WTC11 (cell line): ENCODE measurements at regions of chr1 and their contacts with region 1.

Region 1: DNA sequence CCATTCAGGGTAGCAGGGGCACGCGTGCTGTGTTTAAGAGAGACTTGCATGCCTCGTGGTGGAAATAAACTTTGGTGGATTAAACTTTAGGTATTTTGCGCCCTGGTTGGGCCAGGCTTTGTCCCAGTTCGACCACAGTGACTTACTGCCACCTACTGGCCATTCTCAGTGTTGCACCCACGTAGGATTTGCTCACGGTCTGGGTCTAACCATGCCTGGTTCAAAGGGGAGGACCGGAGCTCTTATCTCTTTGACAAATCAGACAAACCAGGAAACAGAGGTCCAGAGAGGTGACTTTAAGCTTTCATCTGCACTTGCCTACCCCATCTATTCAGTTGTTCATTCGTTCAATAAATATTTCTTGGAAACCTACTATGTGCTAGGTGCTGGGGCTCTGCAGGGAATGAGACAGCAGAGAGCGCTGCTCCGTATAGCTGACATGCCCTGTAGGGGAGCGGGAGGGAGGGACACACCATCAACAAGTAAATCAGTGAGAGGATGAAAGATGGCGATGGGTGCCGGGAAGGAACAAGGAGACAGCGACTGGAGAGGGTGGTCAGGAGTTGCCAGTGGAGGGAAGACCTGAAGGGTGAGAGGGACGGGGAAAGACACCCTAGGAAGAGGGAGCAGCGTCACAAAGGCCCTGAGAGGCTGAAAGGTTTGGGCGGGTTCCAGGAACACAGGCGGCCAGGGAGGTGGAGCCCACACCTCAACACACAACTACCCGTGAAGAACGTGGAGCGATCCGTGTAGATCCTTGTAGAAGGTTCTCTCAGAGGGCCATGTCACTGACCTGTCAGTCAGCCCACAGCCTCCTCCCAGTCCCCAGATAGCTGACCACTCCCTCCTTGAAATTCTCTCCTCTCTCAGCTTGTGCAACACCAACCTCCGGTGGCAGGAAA is 27.2 kb upstream of the TINAGL1 start:
- DNase-seq: peak; percentile 93
- ATAC-seq: peak; percentile 89
- H3K4me3 Mint-ChIP-seq: peak overlapping the region; percentile 81
- H3K27ac Mint-ChIP-seq: no peak overlapping the region
- H3K4me1 Mint-ChIP-seq: peaks cover 14% of the 10 kb centered on the region; the same call in 1 of the 2 replicates
- H3K27me3 Mint-ChIP-seq: no peaks in the 10 kb centered on the region
- CTCF ChIP-seq: peak; percentile 91

Region 2: GRCh38 chr1:31318146-31318545 is 231.0 kb before region 1 on chr1:
- CTCF ChIA-PET with region 1: no interaction called
- POLR2A ChIA-PET with region 1: no interaction called
- DNase-seq: no peak
- ATAC-seq: no peak
- H3K4me3 Mint-ChIP-seq: no peak overlapping the region
- H3K27ac Mint-ChIP-seq: no peak overlapping the region
- H3K4me1 Mint-ChIP-seq: no peaks in the 10 kb centered on the region
- H3K27me3 Mint-ChIP-seq: no peaks in the 10 kb centered on the region
- CTCF ChIP-seq: no peak

Region 3: DNA sequence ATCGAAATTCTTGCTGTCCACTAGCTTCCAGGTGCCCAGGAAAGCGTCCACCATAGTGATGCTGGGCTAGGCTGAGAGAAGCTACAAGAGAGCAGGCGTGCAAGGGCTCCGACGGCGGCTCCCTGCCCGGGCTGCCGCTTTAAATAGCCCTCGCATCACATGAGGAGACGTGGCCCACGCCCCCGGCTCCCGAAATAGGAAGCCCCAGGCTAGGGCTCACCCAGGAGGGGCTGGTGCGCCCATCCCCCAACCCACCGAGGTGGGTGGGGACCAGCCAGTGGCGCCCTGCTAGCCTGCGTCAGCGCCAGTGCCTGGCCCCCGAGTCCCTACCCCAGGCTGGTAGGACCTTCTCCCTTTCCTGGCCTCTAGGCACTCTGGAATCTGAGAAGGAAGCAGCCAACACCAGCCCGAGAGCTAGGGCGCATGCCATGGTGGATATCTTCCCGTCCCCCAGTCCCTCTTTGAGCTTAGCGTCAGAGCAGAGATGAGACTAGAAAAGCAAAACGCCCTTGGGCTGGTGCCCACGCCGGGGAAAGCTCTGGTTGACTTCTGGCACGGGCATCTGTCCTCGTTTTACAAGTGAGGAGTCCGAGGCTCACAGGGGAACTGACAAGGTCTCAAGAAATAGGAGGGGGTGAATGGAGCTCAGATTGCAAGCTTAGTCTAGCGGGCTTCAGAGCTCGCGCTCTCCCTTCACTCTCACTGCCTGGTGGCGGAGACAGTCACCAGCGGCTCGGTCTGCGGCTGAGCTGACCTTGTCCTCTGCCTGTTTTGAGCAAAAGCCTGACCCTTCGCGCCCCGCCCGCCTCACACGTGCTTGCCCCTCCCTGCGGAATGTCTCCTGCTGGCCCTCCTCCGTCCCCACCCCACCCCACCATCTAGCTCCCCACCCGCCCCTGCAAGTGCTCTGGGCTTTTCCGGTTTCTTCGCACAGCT is 175.9 kb before region 1 on chr1 and contains the start of gene FABP3:
- CTCF ChIA-PET with region 1: interaction called, 22 read pairs
- POLR2A ChIA-PET with region 1: interaction called, 4 read pairs
- DNase-seq: peak; percentile 95
- ATAC-seq: peak; percentile 72
- H3K4me3 Mint-ChIP-seq: peak within 1 kb of the TSS; percentile 70
- H3K27ac Mint-ChIP-seq: peak within 1 kb of the TSS; percentile 94
- H3K4me1 Mint-ChIP-seq: peaks cover 52% of the 10 kb centered on the region
- H3K27me3 Mint-ChIP-seq: peaks cover 4% of the 10 kb centered on the region
- CTCF ChIP-seq: no peak
- total RNA-seq, gene FABP3: 18.0 to 25.0 TPM (median 19.0 TPM) in 3 replicates

Region 4: DNA sequence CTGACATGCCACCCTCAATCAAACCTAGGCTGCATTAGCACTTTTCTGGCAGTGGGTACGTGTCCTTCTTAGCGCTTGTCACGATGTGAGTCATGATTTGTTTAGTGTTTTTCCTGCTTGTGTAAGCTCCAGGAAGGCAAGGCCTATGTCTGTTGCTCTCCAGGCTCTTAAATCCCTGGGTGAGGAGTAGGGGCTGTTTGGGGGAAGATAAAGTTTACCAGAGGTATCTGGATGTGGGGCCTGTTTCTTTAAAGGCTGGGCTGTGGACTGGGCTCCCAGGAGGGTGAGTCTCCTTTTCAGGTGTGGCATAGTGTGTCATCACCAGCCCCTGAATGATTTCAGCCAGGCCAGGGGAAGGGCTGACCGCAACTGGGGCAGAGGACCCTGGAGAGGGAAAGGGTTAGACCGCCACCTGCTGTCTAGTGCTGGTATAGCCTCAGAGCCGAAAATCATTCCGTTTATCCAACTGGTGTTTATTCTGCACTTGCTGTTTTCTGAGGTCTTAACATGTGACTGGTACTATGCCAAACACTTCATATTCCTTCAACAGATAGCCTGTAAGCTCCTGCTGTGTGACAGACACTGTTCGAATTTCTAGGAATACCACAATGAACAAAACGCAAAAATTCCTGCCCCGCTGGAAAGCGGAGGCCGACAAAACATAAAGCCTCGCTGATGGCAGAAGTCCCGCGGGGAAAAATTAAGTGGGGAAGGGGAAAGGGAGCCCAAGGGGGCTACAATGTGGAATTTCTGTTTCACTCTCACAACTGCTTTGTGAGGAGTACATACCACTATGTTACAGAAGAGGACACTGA is 126.4 kb before region 1 on chr1:
- CTCF ChIA-PET with region 1: interaction called, 57 read pairs
- POLR2A ChIA-PET with region 1: no interaction called
- DNase-seq: peak; percentile 83
- ATAC-seq: peak; percentile 74
- H3K4me3 Mint-ChIP-seq: no peak overlapping the region
- H3K27ac Mint-ChIP-seq: no peak overlapping the region
- H3K4me1 Mint-ChIP-seq: peaks cover 12% of the 10 kb centered on the region; the same call in 1 of the 2 replicates
- H3K27me3 Mint-ChIP-seq: no peaks in the 10 kb centered on the region
- CTCF ChIP-seq: peak; percentile 83

Region 5: GRCh38 chr1:31454971-31455370 is 94.2 kb before region 1 on chr1:
- CTCF ChIA-PET with region 1: interaction called, 24 read pairs
- POLR2A ChIA-PET with region 1: no interaction called
- DNase-seq: no peak
- ATAC-seq: no peak
- H3K4me3 Mint-ChIP-seq: no peak overlapping the region
- H3K27ac Mint-ChIP-seq: no peak overlapping the region
- H3K4me1 Mint-ChIP-seq: peaks cover 12% of the 10 kb centered on the region
- H3K27me3 Mint-ChIP-seq: peaks cover 20% of the 10 kb centered on the region
- CTCF ChIP-seq: no peak

Region 6: GRCh38 chr1:31509124-31510072 is 39.8 kb before region 1 on chr1:
- CTCF ChIA-PET with region 1: interaction called, 18 read pairs
- POLR2A ChIA-PET with region 1: no interaction called
- DNase-seq: no peak
- ATAC-seq: no peak
- H3K4me3 Mint-ChIP-seq: no peak overlapping the region
- H3K27ac Mint-ChIP-seq: no peak overlapping the region
- H3K4me1 Mint-ChIP-seq: peaks cover 19% of the 10 kb centered on the region
- H3K27me3 Mint-ChIP-seq: no peaks in the 10 kb centered on the region; the same call in 1 of the 2 replicates
- CTCF ChIP-seq: no peak

Region 7: GRCh38 chr1:31564134-31564989 is 15.2 kb after region 1 on chr1:
- CTCF ChIA-PET with region 1: interaction called, 14 read pairs
- POLR2A ChIA-PET with region 1: no interaction called
- DNase-seq: peak; percentile 75
- ATAC-seq: peak; percentile 81
- H3K4me3 Mint-ChIP-seq: no peak overlapping the region
- H3K27ac Mint-ChIP-seq: no peak overlapping the region
- H3K4me1 Mint-ChIP-seq: peaks cover 19% of the 10 kb centered on the region
- H3K27me3 Mint-ChIP-seq: no peaks in the 10 kb centered on the region; the same call in 1 of the 2 replicates
- CTCF ChIP-seq: peak; percentile 64

Region 8: GRCh38 chr1:31617917-31618660 is 68.9 kb after region 1 on chr1:
- CTCF ChIA-PET with region 1: interaction called, 28 read pairs
- POLR2A ChIA-PET with region 1: no interaction called
- DNase-seq: peak; percentile 82
- ATAC-seq: peak; percentile 80
- H3K4me3 Mint-ChIP-seq: peak overlapping the region; percentile 50
- H3K27ac Mint-ChIP-seq: no peak overlapping the region
- H3K4me1 Mint-ChIP-seq: peaks cover 14% of the 10 kb centered on the region
- H3K27me3 Mint-ChIP-seq: peaks cover 29% of the 10 kb centered on the region
- CTCF ChIP-seq: peak; percentile 87